A549 (cell line): ENCODE measurements at regions of chr3 and their contacts with region 1.

Region 1: DNA sequence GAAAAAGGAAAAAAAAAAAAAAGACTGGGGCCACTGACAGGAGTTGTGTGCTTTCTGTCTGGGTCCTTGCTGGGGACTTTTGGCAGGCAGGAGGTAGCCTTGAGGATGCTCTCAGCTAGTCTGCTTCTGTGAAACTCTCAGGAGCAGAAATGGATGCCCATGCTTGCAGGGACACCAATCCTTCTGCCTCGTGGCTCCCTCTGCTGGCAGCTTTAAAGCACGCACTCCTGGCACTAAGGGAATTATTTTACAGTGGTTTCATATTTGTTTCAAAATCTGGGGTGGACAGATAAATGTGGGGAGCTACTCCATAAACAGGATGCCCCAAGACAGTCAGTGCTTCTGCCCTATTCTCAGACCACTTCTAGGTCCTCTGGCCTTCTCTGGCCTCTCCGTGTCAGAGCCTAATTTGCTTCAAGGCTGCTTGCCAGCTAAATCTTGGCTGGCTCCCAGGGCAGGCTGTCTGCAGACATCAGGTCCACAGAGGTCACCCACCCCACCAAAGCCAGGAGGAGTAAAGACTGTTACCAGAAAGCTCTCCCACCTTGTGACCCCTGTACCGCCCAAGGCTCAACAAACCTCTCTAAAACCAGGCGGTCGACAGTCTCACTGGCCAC is 17.1 kb downstream of the TRAIP start:
- DNase-seq: peak; percentile 40 to 72
- ATAC-seq: peak; percentile 82 to 91; a peak in 5 of 6 replicates
- H3K4me3 ChIP-seq: no peak overlapping the region
- H3K27ac ChIP-seq: no peak overlapping the region
- H3K4me1 ChIP-seq: no peaks in the 10 kb centered on the region
- CTCF ChIP-seq: peak; percentile 76
- EP300 ChIP-seq: no peak
- POLR2A ChIP-seq: no peak
- RAD21 ChIP-seq: peak; percentile 70 to 71

Region 2: GRCh38 chr3:49703443-49703927 is 135.8 kb before region 1 on chr3:
- CTCF ChIA-PET with region 1: interaction called, 44 read pairs
- POLR2A ChIA-PET with region 1: no interaction called
- DNase-seq: peak; percentile 58 to 62
- ATAC-seq: peak; percentile 87 to 94
- H3K4me3 ChIP-seq: no peak overlapping the region
- H3K27ac ChIP-seq: no peak overlapping the region
- H3K4me1 ChIP-seq: no peaks in the 10 kb centered on the region
- CTCF ChIP-seq: peak; percentile 53
- EP300 ChIP-seq: no peak
- POLR2A ChIP-seq: no peak
- RAD21 ChIP-seq: peak; percentile 64 to 74

Region 3: GRCh38 chr3:49802719-49803464 is 36.4 kb before region 1 on chr3 and contains the start of gene INKA1:
- CTCF ChIA-PET with region 1: interaction called, 119 read pairs
- POLR2A ChIA-PET with region 1: no interaction called
- DNase-seq: peak; percentile 70 to 81
- ATAC-seq: peak; percentile 78 to 85
- H3K4me3 ChIP-seq: peak within 1 kb of the TSS; percentile 80
- H3K27ac ChIP-seq: peak within 1 kb of the TSS; percentile 76 to 88
- H3K4me1 ChIP-seq: peaks cover 14% of the 10 kb centered on the region
- CTCF ChIP-seq: peak; percentile 68
- EP300 ChIP-seq: no peak
- POLR2A ChIP-seq: no peak
- RAD21 ChIP-seq: peak; percentile 75 to 82
- polyA plus RNA-seq, gene INKA1: 0.21 and 0.39 TPM in 2 replicates

Region 4: DNA sequence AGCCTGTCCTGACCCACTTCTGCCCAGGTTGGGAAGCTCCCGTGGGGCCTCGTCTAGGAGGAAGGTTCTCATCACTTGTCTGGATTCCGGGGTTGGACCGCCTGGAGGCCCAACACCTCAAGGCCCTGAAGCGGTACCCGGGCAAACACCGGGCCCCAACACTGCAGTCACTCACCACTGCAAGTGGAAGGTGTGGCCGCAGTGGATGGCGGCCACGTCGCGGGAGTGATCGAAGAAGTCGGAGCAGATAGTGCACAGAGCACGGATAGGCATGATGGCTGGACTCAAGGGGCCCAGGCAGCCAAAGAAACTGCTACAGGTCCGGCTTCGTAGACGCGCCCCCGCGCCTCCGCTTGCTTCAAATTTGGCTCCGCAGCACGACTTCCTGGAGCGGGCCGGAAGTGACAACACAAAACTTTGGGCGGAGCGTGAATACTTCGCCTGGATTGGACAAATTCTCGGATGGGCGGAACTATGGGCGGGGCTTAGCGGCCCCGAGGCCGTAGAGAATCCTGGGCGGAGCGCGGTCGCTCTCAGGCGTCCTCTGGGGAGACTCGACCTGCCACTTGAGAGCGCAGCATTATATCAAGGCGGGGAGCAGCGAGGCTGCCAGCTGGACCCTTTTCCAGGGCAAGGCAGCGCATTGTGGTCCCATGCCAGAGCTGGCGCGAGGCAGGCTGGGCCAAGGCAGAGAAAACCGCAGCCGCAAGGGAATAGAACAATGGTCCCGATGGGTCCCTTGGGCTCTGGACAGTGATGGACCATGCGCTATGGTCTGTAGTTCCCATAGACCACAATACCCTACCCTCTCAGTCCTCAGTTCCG is 17.1 kb after region 1 on chr3 and contains the start of gene TRAIP:
- CTCF ChIA-PET with region 1: interaction called, 70 read pairs
- POLR2A ChIA-PET with region 1: no interaction called
- DNase-seq: peak; percentile 89 to 96
- ATAC-seq: peak; percentile 96 to 98
- H3K4me3 ChIP-seq: peak within 1 kb of the TSS; percentile 73
- H3K27ac ChIP-seq: peak within 1 kb of the TSS; percentile 69 to 84
- H3K4me1 ChIP-seq: peaks cover 7% of the 10 kb centered on the region; the same call in 2 of the 3 replicates
- CTCF ChIP-seq: no peak
- EP300 ChIP-seq: no peak
- POLR2A ChIP-seq: peak; percentile 62
- RAD21 ChIP-seq: no peak
- polyA plus RNA-seq, gene TRAIP: 10.2 and 10.7 TPM in 2 replicates

Region 5: DNA sequence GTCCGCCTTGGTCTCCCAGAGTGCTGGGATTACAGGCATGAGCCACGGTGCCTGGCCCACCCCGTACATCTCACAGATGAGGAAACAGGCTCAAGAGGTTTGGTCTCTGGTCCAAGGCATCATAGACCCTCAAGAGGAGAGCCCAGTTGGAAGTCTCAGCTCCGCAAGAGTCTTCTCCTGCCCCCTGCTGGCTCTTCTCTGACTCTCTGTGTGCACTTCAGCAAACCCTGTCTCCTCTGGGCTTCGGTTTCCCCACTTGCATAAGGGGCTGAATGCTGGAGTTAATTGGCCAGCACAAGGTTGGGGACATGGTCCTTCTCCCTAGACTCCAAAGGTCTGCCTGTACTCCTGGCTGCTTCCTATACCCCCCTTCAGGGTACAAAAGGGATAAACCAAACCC is 60.5 kb after region 1 on chr3:
- CTCF ChIA-PET with region 1: interaction called, 46 read pairs
- POLR2A ChIA-PET with region 1: no interaction called
- DNase-seq: no peak
- ATAC-seq: no peak
- H3K4me3 ChIP-seq: no peak overlapping the region
- H3K27ac ChIP-seq: peak overlapping the region; percentile 87 to 93
- H3K4me1 ChIP-seq: peaks cover 51% of the 10 kb centered on the region
- CTCF ChIP-seq: peak; percentile 8; the same call in 1 of the 3 replicates
- EP300 ChIP-seq: no peak
- POLR2A ChIP-seq: no peak
- RAD21 ChIP-seq: peak in 1 of 2 experiments; percentile 19; a peak in 1 of 5 replicates

Region 6: DNA sequence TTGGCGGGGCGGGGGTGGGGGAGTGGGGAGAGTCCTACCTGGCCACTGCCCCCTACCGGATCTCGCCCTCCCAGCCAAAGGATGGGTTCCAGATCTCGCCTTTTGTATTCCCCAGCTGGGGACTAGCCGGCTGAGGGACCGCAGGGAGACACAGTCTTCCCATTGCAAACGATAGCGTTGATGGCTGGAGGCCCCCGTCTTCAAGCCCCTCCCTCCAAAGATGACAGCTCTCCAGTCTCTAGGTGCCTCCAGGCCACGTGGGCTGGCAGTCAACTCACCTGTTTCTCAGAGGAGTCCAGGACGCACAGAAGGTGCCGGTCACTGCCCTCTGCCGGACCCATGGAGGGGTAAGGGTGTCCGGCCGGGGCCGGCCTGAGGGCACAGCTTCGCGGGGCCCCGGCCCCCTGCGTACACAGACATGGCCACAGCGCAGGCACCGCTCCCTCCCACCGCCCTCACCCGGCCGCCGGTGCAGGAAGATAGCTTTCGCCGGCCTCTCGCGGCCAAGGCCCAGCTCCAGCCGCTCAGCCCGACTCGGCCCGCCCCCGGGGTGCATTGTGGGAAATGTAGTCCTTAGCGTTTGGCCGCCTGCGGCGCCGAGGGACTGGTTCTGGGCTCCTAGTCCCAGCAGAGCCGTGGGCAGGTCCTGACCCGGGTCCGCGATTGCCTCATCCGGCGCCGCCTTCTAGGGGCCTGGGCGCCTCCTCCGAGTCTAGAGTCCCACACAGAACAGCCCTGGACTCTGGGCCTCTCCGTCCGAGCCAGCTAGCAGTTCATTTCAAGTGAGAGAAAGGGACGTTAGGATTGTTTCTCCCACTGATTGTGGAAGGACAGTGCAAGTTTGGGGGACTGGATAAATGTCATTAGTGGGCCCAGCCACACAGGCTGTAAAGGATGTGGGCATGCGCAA is 90.3 kb after region 1 on chr3 and contains the start of gene MON1A:
- CTCF ChIA-PET with region 1: interaction called, 16 read pairs
- POLR2A ChIA-PET with region 1: no interaction called
- DNase-seq: peak; percentile 64 to 86
- ATAC-seq: peak; percentile 95 to 96
- H3K4me3 ChIP-seq: peak within 1 kb of the TSS; percentile 68
- H3K27ac ChIP-seq: peak within 1 kb of the TSS; percentile 83 to 87
- H3K4me1 ChIP-seq: peaks cover 17% of the 10 kb centered on the region; the same call in 2 of the 3 replicates
- CTCF ChIP-seq: peak; percentile 25
- EP300 ChIP-seq: no peak
- POLR2A ChIP-seq: peak; percentile 22
- RAD21 ChIP-seq: 0 out of 5 replicates have a peak, but pooled peaks of 1 of the 2 experiments have one; percentile 29
- polyA plus RNA-seq, gene MON1A: 4.2 and 5.1 TPM in 2 replicates

Region 7: DNA sequence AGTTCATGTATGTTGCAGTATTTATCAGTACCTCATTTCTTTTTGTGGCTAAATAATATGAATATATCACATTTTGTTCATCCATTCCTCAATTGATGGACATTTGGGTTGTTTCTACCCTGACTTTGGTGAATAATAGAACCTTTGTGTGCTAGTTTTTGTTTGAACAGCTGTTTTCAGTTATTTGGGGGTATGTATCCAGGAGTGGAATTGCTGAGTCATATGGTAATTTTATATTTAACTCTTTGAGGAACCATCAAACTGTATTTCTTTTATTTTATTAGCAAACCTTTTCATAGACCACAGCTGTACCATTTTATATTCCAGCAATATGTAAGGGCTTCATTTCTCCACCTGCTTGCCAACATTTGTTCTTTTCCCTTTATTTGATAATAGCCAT is 211.1 kb after region 1 on chr3:
- CTCF ChIA-PET with region 1: no interaction called
- POLR2A ChIA-PET with region 1: no interaction called
- DNase-seq: no peak
- ATAC-seq: no peak
- H3K4me3 ChIP-seq: no peak overlapping the region
- H3K27ac ChIP-seq: peak overlapping the region; percentile 36 to 40; a peak in 2 of 6 replicates
- H3K4me1 ChIP-seq: peaks cover 11% of the 10 kb centered on the region
- CTCF ChIP-seq: no peak
- EP300 ChIP-seq: no peak
- POLR2A ChIP-seq: no peak
- RAD21 ChIP-seq: no peak